ENCODE measurements at regions of chr17 and their contacts with region 1.

Region 1: DNA sequence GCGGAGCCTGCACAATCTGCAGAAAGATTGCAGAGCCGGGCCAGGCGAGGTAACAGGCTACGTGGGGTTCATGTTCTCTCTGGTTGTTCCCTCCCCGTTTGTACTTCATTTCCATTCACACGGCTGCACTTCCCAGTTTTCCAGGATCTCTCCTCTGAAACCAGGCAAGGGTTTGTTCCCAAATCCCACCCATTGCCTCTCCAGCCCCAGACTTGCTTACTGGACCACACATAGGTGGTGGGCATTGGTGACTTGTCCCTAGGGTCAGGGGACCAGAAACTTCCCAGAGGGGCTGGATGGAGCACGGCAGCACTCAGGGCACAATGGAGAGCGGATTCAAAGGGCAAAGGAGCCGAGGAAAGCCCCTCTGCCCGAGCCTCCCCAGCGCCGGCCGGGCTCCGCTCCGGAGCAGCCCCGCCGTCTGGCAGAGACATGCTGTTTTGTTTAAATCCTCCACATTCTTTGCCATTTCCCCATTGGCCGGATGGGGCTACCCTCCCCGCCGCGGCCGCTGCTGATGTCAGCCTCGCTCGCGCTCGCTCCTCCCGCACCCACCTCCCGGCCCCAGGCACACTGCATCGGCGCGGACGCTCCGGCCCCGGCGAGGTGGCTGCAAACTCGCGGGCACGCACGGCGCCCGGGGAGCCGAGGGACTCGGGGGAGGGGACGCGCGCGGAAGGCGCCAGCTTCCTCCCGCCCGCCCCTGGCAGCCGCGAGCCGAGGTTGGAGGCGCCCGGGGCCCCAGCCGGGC is at the start of gene PITPNC1:
- DNase-seq: peak; percentile 86 to 94
- ATAC-seq: peak; percentile 72 to 88 (median 83)
- H3K4me3 ChIP-seq: peak within 1 kb of the TSS; percentile 73
- H3K4me3 Mint-ChIP-seq: peak within 1 kb of the TSS; percentile 96
- H3K27ac ChIP-seq: peak within 1 kb of the TSS; percentile 89
- H3K27ac Mint-ChIP-seq: peak within 1 kb of the TSS; percentile 91 to 92
- H3K4me1 ChIP-seq: peaks cover 37% of the 10 kb centered on the region
- H3K4me1 Mint-ChIP-seq: peaks cover 33 to 35% of the 10 kb centered on the region in 2 donors
- H3K27me3 ChIP-seq: no peaks in the 10 kb centered on the region
- H3K27me3 Mint-ChIP-seq: no peaks in the 10 kb centered on the region
- CTCF ChIP-seq: peak; percentile 13
- total RNA-seq, gene PITPNC1: 150 to 185 (median 169) TPM

Region 2: GRCh38 chr17:67093348-67093747 is 283.6 kb before region 1 on chr17:
- intact Hi-C with region 1: no loop called
- DNase-seq: no peak
- ATAC-seq: no peak
- H3K4me3 ChIP-seq: no peak overlapping the region
- H3K4me3 Mint-ChIP-seq: no peak overlapping the region
- H3K27ac ChIP-seq: no peak overlapping the region
- H3K27ac Mint-ChIP-seq: peak overlapping the region; percentile 58 to 71
- H3K4me1 ChIP-seq: peaks cover 4% of the 10 kb centered on the region
- H3K4me1 Mint-ChIP-seq: peaks cover 66 to 74% of the 10 kb centered on the region in 2 donors
- H3K27me3 ChIP-seq: no peaks in the 10 kb centered on the region
- H3K27me3 Mint-ChIP-seq: no peaks in the 10 kb centered on the region
- CTCF ChIP-seq: no peak

Region 3: DNA sequence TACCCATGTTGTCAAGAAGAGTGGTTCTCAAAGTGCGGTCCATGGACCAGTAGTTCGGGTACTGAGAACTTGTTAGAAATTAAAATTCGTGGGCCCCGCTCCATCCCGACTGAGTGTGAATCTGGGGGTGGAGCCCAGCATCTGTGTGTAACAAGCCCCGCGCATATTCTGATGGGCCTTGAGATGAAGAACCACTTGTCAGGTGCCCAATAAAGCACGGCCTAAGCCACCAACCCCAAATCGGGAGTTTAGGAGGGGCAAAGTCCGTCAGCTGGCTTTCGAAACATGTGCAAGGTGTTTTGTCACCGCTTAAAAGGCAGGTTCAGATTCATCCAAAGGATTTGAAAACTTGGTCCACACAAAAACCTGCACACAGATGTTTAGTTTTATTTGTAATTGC is 40.1 kb before region 1 on chr17:
- intact Hi-C with region 1: no loop called
- DNase-seq: no peak
- ATAC-seq: no peak
- H3K4me3 ChIP-seq: no peak overlapping the region
- H3K4me3 Mint-ChIP-seq: no peak overlapping the region
- H3K27ac ChIP-seq: no peak overlapping the region
- H3K27ac Mint-ChIP-seq: peak overlapping the region; percentile 67 to 69
- H3K4me1 ChIP-seq: no peaks in the 10 kb centered on the region
- H3K4me1 Mint-ChIP-seq: no peaks in the 10 kb centered on the region
- H3K27me3 ChIP-seq: no peaks in the 10 kb centered on the region
- H3K27me3 Mint-ChIP-seq: no peaks in the 10 kb centered on the region
- CTCF ChIP-seq: no peak

Region 4: GRCh38 chr17:67421869-67422273 is 45.0 kb after region 1 on chr17:
- intact Hi-C with region 1: loop called (anchors 5 kb)
- DNase-seq: peak in 1 of 2 donors; percentile 93
- ATAC-seq: peak; percentile 87 to 95 (median 95)
- H3K4me3 ChIP-seq: no peak overlapping the region
- H3K4me3 Mint-ChIP-seq: peak overlapping the region; percentile 67
- H3K27ac ChIP-seq: peak overlapping the region; percentile 80
- H3K27ac Mint-ChIP-seq: peak overlapping the region; percentile 88
- H3K4me1 ChIP-seq: peaks cover 62% of the 10 kb centered on the region
- H3K4me1 Mint-ChIP-seq: peaks cover 81 to 89% of the 10 kb centered on the region in 2 donors
- H3K27me3 ChIP-seq: no peaks in the 10 kb centered on the region
- H3K27me3 Mint-ChIP-seq: no peaks in the 10 kb centered on the region
- CTCF ChIP-seq: no peak

Region 5: DNA sequence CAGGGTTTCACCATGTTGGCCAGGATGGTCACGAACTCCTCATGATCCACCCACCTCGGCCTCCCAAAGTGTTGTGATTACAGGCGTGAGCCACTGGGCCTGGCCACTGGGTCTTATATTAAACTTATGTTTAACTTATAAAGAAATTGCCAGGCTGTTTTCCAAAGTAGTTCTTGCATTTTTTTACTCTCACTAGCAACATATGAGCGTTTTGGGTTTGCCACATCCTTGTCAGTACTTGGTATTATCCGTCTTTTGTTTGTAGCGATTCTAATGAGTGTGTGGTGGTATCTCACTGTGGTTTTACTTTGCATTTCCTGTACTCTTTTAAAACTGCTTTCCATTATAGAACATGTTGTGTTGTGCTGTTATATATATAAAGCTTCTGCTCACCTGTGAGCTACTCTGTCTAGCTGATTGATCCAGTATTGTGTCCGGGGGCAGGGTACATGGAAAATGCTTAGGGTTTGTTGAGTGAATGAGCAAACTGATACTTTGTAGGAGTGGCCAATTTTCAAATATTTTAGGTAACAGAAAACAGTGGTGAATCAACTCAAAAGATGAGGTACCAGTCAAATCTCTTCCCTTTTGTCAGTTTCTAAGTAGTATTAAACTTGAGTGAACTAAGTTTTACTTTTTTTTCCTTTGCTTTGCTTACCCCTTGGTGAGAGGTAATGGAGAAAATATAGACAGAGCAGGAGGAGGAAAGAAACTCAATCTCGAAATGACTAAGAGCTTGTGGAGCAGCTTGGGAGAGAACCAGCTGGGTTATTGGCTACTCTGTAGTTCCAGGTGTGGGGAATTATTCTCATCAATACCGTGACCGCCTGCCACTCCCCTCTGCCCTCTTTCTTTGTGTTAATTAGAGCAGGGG is 76.0 kb after region 1 on chr17:
- intact Hi-C with region 1: loop called (anchors 5 kb)
- DNase-seq: peak in 1 of 2 donors; percentile 81
- ATAC-seq: peak; percentile 68 to 83 (median 82)
- H3K4me3 ChIP-seq: no peak overlapping the region
- H3K4me3 Mint-ChIP-seq: peak overlapping the region; percentile 82
- H3K27ac ChIP-seq: peak overlapping the region; percentile 92
- H3K27ac Mint-ChIP-seq: peak overlapping the region; percentile 97
- H3K4me1 ChIP-seq: peaks cover 72% of the 10 kb centered on the region
- H3K4me1 Mint-ChIP-seq: peaks cover 88 to 93% of the 10 kb centered on the region in 2 donors
- H3K27me3 ChIP-seq: no peaks in the 10 kb centered on the region
- H3K27me3 Mint-ChIP-seq: no peaks in the 10 kb centered on the region
- CTCF ChIP-seq: no peak

Region 6: GRCh38 chr17:67602956-67603355 is 226.0 kb after region 1 on chr17:
- intact Hi-C with region 1: loop called (anchors 1 kb)
- DNase-seq: peak; percentile 24 to 71
- ATAC-seq: peak; percentile 46 to 95 (median 81)
- H3K4me3 ChIP-seq: no peak overlapping the region
- H3K4me3 Mint-ChIP-seq: no peak overlapping the region
- H3K27ac ChIP-seq: no peak overlapping the region
- H3K27ac Mint-ChIP-seq: peak overlapping the region; percentile 5 to 45
- H3K4me1 ChIP-seq: peaks cover 6% of the 10 kb centered on the region
- H3K4me1 Mint-ChIP-seq: peaks cover 36 to 40% of the 10 kb centered on the region in 2 donors
- H3K27me3 ChIP-seq: no peaks in the 10 kb centered on the region
- H3K27me3 Mint-ChIP-seq: no peaks in the 10 kb centered on the region
- CTCF ChIP-seq: peak; percentile 65

Region 7: DNA sequence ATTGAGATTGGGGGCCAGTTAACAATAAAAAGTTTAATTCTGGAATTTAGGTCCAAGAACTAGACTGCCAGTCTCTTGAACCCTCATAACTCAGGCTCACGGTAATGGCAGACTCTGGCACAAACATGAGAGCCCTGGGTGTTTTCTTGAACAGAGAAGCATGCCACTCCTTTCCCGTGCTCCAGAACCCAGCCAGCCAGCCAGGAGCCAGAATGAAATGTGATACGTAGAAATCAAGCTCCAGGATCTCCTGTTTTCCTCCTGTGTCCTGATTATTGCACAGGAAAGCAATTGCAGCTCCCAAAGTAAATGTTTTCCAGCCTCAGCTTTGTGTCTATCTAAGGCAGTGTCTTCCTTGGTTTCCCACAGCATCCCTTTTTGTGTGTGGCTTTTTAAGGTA is 294.6 kb after region 1 on chr17:
- intact Hi-C with region 1: no loop called
- DNase-seq: no peak
- ATAC-seq: no peak
- H3K4me3 ChIP-seq: no peak overlapping the region
- H3K4me3 Mint-ChIP-seq: no peak overlapping the region
- H3K27ac ChIP-seq: no peak overlapping the region
- H3K27ac Mint-ChIP-seq: peak overlapping the region in 1 of 2 donors; percentile 11
- H3K4me1 ChIP-seq: no peaks in the 10 kb centered on the region
- H3K4me1 Mint-ChIP-seq: peaks cover 0 to 6% of the 10 kb centered on the region in 2 donors
- H3K27me3 ChIP-seq: no peaks in the 10 kb centered on the region
- H3K27me3 Mint-ChIP-seq: no peaks in the 10 kb centered on the region
- CTCF ChIP-seq: no peak

Region 8: GRCh38 chr17:67689534-67690177 is 312.7 kb after region 1 on chr17:
- intact Hi-C with region 1: loop called (anchors 1 kb)
- DNase-seq: peak in 1 of 2 donors; percentile 79
- ATAC-seq: peak; percentile 65 to 83 (median 77)
- H3K4me3 ChIP-seq: no peak overlapping the region
- H3K4me3 Mint-ChIP-seq: no peak overlapping the region
- H3K27ac ChIP-seq: no peak overlapping the region
- H3K27ac Mint-ChIP-seq: peak overlapping the region in 1 of 2 donors; percentile 38
- H3K4me1 ChIP-seq: no peaks in the 10 kb centered on the region
- H3K4me1 Mint-ChIP-seq: no peaks in the 10 kb centered on the region
- H3K27me3 ChIP-seq: no peaks in the 10 kb centered on the region
- H3K27me3 Mint-ChIP-seq: no peaks in the 10 kb centered on the region
- CTCF ChIP-seq: peak; percentile 91

Measured in natural killer cell (primary cell).